Naive thymus-derived CD4-positive, alpha-beta T cell (primary cell): ENCODE measurements at regions of chr7 and their contacts with region 1.

Region 1: DNA sequence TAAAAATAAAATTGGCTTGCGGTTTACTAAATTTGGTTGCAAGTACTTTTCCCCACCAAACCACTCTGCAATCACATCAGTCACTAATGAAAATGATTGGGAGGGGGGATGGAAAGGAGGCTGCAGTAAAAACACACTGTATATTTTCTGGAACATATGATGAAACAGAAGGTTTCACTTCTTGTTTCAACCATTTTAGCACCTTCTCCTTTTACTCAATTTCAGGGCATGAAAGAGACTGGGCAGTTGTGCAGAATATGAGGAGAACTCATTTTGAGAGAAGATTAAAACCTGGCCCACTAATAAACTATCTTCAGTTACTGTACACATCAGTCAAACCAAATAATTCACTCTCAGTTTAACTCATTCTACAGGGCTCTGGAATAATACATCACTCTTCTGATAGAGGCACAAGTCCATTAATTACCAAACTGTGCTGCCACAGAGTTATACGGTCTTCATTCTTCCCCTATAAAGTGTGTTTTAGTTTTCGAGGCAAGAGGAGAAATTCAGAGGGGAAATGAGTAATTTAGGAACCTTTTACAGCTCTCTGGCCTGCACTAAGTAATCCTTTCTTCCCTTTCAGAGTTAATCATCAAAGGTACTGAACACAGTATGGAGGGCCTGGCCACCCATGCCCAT is 25.5 kb downstream of the JAZF1 start:
- DNase-seq: no peak
- ATAC-seq: peak; percentile 56
- H3K4me3 ChIP-seq: no peak overlapping the region
- H3K4me3 Mint-ChIP-seq: peak overlapping the region in 4 of 10 donors; percentile 4 to 16 (median 10)
- H3K27ac ChIP-seq: no peak overlapping the region
- H3K27ac Mint-ChIP-seq: peak overlapping the region in 4 of 9 donors; percentile 9 to 28 (median 24)
- H3K4me1 ChIP-seq: peaks cover 0 to 32% of the 10 kb centered on the region in 2 donors
- H3K4me1 Mint-ChIP-seq: peaks cover 22 to 59% (median 44%) of the 10 kb centered on the region in 7 donors
- H3K27me3 ChIP-seq: no peaks in the 10 kb centered on the region
- H3K27me3 Mint-ChIP-seq: peaks cover 0 to 4% (median 0%) of the 10 kb centered on the region in 5 donors

Region 2: GRCh38 chr7:28088032-28088431 is 67.1 kb before region 1 on chr7:
- CTCF ChIA-PET with region 1: no interaction called
- POLR2A ChIA-PET with region 1: no interaction called
- intact Hi-C with region 1: no loop called
- DNase-seq: no peak
- ATAC-seq: no peak
- H3K4me3 ChIP-seq: no peak overlapping the region
- H3K4me3 Mint-ChIP-seq: no peak overlapping the region
- H3K27ac ChIP-seq: no peak overlapping the region
- H3K27ac Mint-ChIP-seq: peak overlapping the region in 1 of 9 donors; percentile 51
- H3K4me1 ChIP-seq: no peaks in the 10 kb centered on the region
- H3K4me1 Mint-ChIP-seq: peaks cover 0 to 23% (median 18%) of the 10 kb centered on the region in 7 donors
- H3K27me3 ChIP-seq: no peaks in the 10 kb centered on the region
- H3K27me3 Mint-ChIP-seq: peaks cover 0 to 6% (median 0%) of the 10 kb centered on the region in 5 donors

Region 3: GRCh38 chr7:28239823-28240204 is 84.7 kb after region 1 on chr7:
- CTCF ChIA-PET with region 1: no interaction called
- POLR2A ChIA-PET with region 1: no interaction called
- intact Hi-C with region 1: loop called in 1 of 2 experiments (anchors 5 kb)
- DNase-seq: no peak
- ATAC-seq: peak; percentile 82
- H3K4me3 ChIP-seq: no peak overlapping the region
- H3K4me3 Mint-ChIP-seq: no peak overlapping the region
- H3K27ac ChIP-seq: no peak overlapping the region
- H3K27ac Mint-ChIP-seq: no peak overlapping the region
- H3K4me1 ChIP-seq: no peaks in the 10 kb centered on the region
- H3K4me1 Mint-ChIP-seq: peaks cover 0 to 9% (median 7%) of the 10 kb centered on the region in 7 donors
- H3K27me3 ChIP-seq: no peaks in the 10 kb centered on the region
- H3K27me3 Mint-ChIP-seq: peaks cover 0 to 34% (median 0%) of the 10 kb centered on the region in 5 donors